A549 (cell line): ENCODE measurements at regions of chr11 and their contacts with region 1.

Region 1: DNA sequence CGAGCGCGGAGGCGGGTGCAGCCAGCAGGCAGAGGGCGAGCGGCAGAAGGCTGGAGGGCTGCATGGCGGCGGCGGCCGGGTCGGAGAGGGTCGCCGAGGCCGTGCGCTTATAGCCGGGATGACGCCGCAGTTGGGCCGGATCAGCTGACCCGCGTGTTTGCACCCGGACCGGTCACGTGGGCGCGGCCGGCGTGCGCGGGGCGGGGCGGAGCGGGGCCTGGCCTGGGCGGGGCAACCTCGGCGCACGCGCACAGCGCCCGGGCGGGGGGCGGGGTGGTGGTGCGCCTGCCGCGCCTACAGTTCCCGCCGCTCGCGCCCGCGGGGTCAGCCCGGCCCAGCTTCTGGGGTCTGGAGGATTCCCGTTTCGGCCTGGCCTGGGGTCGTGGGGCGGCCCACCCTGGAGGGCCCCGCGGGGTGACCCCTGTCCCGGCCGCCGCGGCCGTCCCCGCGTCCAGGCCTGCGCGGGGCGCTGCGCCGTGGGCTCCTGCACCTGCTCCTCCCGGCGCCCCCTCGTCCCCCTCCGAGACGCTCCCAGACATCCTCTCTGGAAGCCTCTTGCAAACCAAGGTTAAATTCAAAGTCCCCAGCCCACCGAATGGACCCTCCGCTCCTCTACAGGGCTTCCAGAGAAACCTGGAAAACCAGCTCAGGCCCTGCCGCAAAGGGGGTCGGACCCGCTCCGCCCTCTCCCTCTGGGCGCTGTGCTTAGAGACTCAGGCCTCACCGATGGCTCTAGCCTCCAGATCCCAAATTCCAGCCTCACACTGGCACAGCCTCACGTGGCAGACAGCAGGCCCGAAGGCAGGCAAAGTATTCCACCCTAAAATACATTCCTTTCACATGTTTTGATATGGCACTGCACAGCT is at the start of gene CTSD:
- DNase-seq: peak; percentile 84 to 91
- ATAC-seq: peak; percentile 69 to 70
- H3K4me3 ChIP-seq: peak within 1 kb of the TSS; percentile 100
- H3K27ac ChIP-seq: peak within 1 kb of the TSS; percentile 96 to 97
- H3K4me1 ChIP-seq: peaks cover 37% of the 10 kb centered on the region
- CTCF ChIP-seq: 0 out of 3 replicates have a peak, but pooled peaks have one; percentile 20
- EP300 ChIP-seq: no peak
- POLR2A ChIP-seq: peak; percentile 35
- RAD21 ChIP-seq: peak in 1 of 2 experiments; percentile 12; a peak in 1 of 5 replicates
- polyA plus RNA-seq, gene CTSD: 74.0 and 117 TPM in 2 replicates

Region 2: GRCh38 chr11:1782831-1783724 is 19.0 kb after region 1 on chr11:
- CTCF ChIA-PET with region 1: no interaction called
- POLR2A ChIA-PET with region 1: interaction called, 13 read pairs
- DNase-seq: peak in 1 of 2 experiments; percentile 31
- ATAC-seq: peak in 1 of 2 experiments; percentile 17; a peak in 2 of 6 replicates
- H3K4me3 ChIP-seq: no peak overlapping the region
- H3K27ac ChIP-seq: peak overlapping the region; percentile 45 to 75; a peak in 5 of 6 replicates
- H3K4me1 ChIP-seq: peaks cover 28% of the 10 kb centered on the region
- CTCF ChIP-seq: no peak
- EP300 ChIP-seq: no peak
- POLR2A ChIP-seq: no peak
- RAD21 ChIP-seq: no peak